AG04450 (cell line): ENCODE measurements at regions of chr21 and their contacts with region 1.

Region 1: GRCh38 chr21:43646550-43647260 is 12.6 kb downstream of the HSF2BP start:
- DNase-seq: peak; percentile 81
- H3K4me3 ChIP-seq: no peak overlapping the region
- H3K27ac ChIP-seq: no peak overlapping the region
- H3K27me3 ChIP-seq: peaks cover 3% of the 10 kb centered on the region
- CTCF ChIP-seq: peak; percentile 99

Region 2: GRCh38 chr21:43626390-43626789 is 20.3 kb before region 1 on chr21:
- CTCF ChIA-PET with region 1: interaction called, 11 read pairs
- POLR2A ChIA-PET with region 1: no interaction called
- DNase-seq: no peak
- H3K4me3 ChIP-seq: no peak overlapping the region
- H3K27ac ChIP-seq: no peak overlapping the region
- H3K27me3 ChIP-seq: no peaks in the 10 kb centered on the region
- CTCF ChIP-seq: no peak

Region 3: GRCh38 chr21:43697758-43698643 is 51.3 kb after region 1 on chr21:
- CTCF ChIA-PET with region 1: no interaction called
- POLR2A ChIA-PET with region 1: no interaction called
- DNase-seq: no peak
- H3K4me3 ChIP-seq: no peak overlapping the region
- H3K27ac ChIP-seq: no peak overlapping the region
- H3K27me3 ChIP-seq: no peaks in the 10 kb centered on the region
- CTCF ChIP-seq: no peak

Region 4: GRCh38 chr21:43789276-43790009 is 142.7 kb after region 1 on chr21 and contains the start of gene RRP1:
- CTCF ChIA-PET with region 1: no interaction called
- POLR2A ChIA-PET with region 1: no interaction called
- DNase-seq: peak; percentile 37
- H3K4me3 ChIP-seq: peak within 1 kb of the TSS; percentile 96
- H3K27ac ChIP-seq: peak within 1 kb of the TSS; percentile 75
- H3K27me3 ChIP-seq: no peaks in the 10 kb centered on the region
- CTCF ChIP-seq: peak; percentile 74
- polyA plus RNA-seq, gene RRP1: 8.2 and 10.6 TPM in 2 replicates

Region 5: DNA sequence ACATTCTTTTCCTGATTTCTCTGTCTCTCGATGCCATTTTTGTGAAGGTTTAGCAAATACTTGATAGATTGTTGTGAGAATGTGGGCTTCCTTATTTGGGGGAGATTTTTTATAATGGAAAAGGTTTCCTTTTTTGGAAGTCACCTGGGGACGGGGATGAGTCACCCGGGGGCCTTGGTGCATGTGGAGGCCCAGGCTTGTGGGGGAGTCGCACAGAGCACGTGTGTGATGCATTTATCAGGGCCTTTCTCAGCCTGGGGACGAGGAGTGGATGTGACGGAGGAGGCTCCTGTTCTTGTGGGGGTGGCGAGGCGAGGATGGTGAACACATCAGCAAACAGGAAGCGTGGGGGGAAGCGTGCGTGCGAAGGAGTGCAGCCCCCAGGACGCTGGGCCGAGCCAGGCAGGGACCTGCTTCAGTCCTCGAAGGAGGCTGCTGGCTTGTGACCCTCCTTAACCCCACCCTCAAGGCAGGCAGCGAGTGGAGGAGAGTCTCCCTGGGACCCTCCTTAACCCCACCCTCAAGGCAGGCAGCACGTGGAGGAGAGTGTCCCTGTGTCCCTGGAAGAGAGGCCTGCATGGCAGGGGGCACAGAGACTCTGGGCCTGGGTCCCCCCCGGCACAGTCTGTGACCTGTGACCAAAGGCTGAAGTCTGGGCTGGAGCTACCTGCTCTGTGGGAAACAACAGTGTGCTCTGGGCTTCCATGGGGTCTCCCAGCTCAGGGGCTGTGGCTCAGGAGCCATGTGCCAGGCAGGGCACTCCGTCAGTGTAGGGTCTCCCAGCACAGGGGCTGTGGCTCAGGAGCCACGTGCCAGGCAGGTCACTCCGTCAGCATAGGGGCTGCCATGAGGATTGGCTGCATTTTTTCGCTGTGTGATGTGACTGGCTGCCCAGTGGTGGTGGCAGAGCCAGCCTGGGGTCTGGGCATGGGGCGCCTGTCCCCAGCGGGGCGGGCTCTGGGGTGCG is 275.6 kb after region 1 on chr21:
- CTCF ChIA-PET with region 1: no interaction called
- POLR2A ChIA-PET with region 1: no interaction called
- DNase-seq: no peak
- H3K4me3 ChIP-seq: no peak overlapping the region
- H3K27ac ChIP-seq: no peak overlapping the region
- H3K27me3 ChIP-seq: no peaks in the 10 kb centered on the region
- CTCF ChIP-seq: no peak